Activated CD8-positive, alpha-beta T cell treated with anti-CD3 and anti-CD28 coated beads, Interleukin-2, amount 10 ng/mL, durations not matched to agents 7 days and 5 days (primary cell): ENCODE measurements at regions of chr2 and their contacts with region 1.

Region 1: GRCh38 chr2:54899576-54900200 is 150.6 kb downstream of the RTN4 start:
- DNase-seq: no peak
- ATAC-seq: no peak
- H3K4me3 Mint-ChIP-seq: no peak overlapping the region
- H3K27ac Mint-ChIP-seq: no peak overlapping the region
- H3K4me1 Mint-ChIP-seq: peaks cover 18% of the 10 kb centered on the region
- H3K27me3 Mint-ChIP-seq: no peaks in the 10 kb centered on the region

Region 2: DNA sequence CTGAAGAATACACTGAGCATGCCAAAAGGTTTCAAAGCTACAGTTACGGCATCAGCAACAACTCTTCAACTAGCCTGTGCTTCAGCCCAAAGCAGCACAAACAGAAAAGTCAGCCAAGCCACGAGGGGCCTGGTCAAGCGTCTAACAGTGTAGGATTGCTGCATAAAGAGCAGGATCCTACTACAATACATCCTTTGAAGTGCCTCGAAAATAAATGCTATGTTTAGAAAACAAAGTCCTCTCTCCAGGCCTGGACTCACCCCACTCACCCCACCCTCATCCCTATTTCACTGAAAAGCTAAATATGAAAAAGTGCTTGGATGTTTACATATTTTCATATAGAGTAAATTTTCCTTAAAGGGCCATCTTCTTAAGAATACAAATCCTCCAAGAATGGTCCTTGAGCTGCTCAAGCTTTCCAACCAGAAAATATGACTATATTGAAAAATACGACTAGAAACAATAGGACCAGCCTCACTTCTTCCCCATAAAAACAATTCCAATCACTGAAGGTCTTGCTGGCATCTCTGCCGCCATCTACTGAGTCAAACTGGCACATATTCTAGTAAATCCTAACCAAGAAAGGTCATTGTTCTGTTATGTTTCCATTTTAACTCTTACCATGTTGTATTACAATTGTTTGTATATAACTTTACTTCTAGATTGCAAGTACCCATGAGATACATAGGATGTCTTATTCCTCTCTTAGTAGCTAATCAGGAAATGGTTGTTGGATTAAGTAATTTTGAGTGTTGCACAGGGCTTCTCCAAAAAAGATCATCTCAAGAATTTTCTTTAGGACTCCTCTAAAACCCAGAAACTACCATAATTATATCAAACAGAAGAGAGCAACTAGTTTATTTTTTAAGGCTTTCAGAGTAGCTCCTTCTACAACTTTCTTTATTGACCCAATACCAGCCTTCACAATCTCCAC is 268.8 kb after region 1 on chr2:
- CTCF ChIA-PET with region 1: interaction called, 25 read pairs
- POLR2A ChIA-PET with region 1: no interaction called
- DNase-seq: peak; percentile 50
- ATAC-seq: no peak
- H3K4me3 Mint-ChIP-seq: no peak overlapping the region
- H3K27ac Mint-ChIP-seq: no peak overlapping the region
- H3K4me1 Mint-ChIP-seq: no peaks in the 10 kb centered on the region
- H3K27me3 Mint-ChIP-seq: no peaks in the 10 kb centered on the region

Region 3: GRCh38 chr2:55175254-55176025 is 275.8 kb after region 1 on chr2:
- CTCF ChIA-PET with region 1: interaction called, 25 read pairs
- POLR2A ChIA-PET with region 1: no interaction called
- DNase-seq: no peak
- ATAC-seq: peak; percentile 77
- H3K4me3 Mint-ChIP-seq: no peak overlapping the region
- H3K27ac Mint-ChIP-seq: no peak overlapping the region
- H3K4me1 Mint-ChIP-seq: no peaks in the 10 kb centered on the region
- H3K27me3 Mint-ChIP-seq: no peaks in the 10 kb centered on the region

Region 4: GRCh38 chr2:55196506-55196905 is 296.8 kb after region 1 on chr2:
- CTCF ChIA-PET with region 1: no interaction called
- POLR2A ChIA-PET with region 1: no interaction called
- DNase-seq: no peak
- ATAC-seq: no peak
- H3K4me3 Mint-ChIP-seq: no peak overlapping the region
- H3K27ac Mint-ChIP-seq: no peak overlapping the region
- H3K4me1 Mint-ChIP-seq: no peaks in the 10 kb centered on the region
- H3K27me3 Mint-ChIP-seq: no peaks in the 10 kb centered on the region